ENCODE measurements at regions of chr15 and their contacts with region 1.

Region 1: GRCh38 chr15:89430530-89431341 is 65.6 kb downstream of the RHCG start:
- DNase-seq: peak; percentile 57 to 71
- ATAC-seq: peak; percentile 96 to 97
- H3K4me3 ChIP-seq: peak overlapping the region; percentile 48 to 72 (median 56)
- H3K27ac ChIP-seq: no peak overlapping the region
- H3K4me1 ChIP-seq: peaks cover 0 to 5% of the 10 kb centered on the region in 2 donors
- H3K27me3 ChIP-seq: no peaks in the 10 kb centered on the region
- CTCF ChIP-seq: peak; percentile 90 to 99 (median 96)
- POLR2A ChIP-seq: no peak

Region 2: DNA sequence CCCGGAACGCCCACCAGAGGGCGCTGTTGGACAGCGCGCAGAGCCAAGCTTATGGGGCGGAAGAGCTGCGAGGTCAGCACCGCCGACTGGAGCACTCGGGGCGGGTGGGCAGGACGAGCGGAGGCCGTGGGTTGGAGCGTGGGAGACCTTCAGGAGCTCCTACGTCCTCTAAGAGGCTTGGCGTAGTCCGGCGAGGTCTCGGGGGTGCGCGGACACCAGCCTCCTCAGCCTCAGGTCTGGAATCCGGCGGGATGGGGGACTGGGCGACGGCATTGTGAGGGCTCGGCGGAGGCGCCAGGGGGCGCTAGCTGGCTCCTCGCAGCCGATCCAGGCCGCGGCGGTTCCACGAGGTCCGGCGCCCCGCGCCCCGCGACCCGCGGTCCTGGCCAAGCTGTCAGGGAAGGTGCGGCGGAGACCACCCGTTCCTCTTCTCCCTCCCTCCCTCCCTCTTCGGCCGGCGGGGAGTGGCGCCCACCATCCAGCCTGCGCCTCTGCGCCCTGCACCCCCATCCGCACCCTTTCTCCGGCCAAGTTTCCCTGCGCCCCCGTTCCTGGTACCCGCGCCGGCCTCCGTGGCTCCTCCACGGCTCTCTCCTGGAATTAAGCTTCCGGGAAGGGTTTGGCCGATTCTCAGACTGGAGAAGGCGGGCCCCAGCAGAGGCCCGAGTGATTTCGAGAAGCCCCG is 71.8 kb before region 1 on chr15:
- in situ Hi-C with region 1: loop called in 3 of 4 experiments (anchors 5 to 10 kb)
- intact Hi-C with region 1: loop called (anchors 1 kb)
- DNase-seq: peak; percentile 13 to 42
- ATAC-seq: peak; percentile 86 to 96
- H3K4me3 ChIP-seq: peak overlapping the region; percentile 39 to 84 (median 54)
- H3K27ac ChIP-seq: no peak overlapping the region
- H3K4me1 ChIP-seq: peaks cover 0 to 8% of the 10 kb centered on the region in 2 donors
- H3K27me3 ChIP-seq: peaks cover 88 to 91% (median 89%) of the 10 kb centered on the region in 3 donors
- CTCF ChIP-seq: peak; percentile 95 to 100 (median 98)
- POLR2A ChIP-seq: no peak

Measured in gastrocnemius medialis (tissue), 4 donors.